ENCODE measurements at regions of chr15 and their contacts with region 1.

Region 1: DNA sequence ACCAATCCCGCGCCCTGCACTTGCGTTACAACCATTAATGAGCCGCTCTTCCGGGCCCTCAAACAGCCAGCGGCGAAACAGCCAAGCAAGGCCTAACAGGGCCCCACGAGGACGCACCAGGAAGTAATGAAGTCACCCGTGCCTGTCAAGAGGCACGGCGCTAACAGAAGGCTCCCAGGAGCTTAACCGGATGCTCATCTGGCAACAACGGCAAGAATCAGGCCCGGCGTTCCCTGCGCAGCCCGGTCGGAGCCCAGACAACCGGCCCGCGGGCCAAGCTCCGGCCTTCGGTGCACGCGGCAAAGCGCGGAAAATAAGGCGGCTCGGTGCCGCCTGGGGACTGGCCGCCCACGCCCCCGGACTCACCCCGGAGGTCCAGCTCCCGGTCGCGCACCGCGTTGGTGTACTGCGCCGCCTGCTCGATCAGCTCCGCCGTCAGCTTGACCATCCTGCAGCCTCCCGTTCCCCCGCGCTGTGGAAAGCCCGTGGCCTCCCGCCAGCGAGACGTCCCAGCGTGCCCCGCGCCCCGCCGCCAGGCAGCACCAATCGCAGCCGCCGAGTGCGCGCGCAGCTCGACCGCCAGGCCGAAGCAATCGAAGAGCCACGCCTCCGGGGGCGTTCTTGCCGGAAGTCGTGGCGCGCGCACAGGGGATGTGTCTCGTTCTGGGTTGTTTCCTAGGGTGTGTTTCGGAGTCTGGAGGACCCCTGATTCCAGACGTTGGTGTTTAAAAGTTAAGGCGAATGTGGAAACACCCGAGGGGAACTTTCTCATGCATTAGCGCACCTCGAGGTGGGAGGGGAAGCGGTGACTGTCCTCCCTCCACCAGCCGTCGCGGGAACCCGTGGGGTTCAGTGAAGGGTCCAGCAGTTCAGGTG is at the start of gene SNRPA1:
- DNase-seq: peak; percentile 99
- H3K4me3 Mint-ChIP-seq: peak within 1 kb of the TSS; percentile 90
- H3K27ac Mint-ChIP-seq: peak within 1 kb of the TSS; percentile 96
- H3K4me1 Mint-ChIP-seq: peaks cover 38% of the 10 kb centered on the region
- H3K27me3 Mint-ChIP-seq: no peaks in the 10 kb centered on the region
- total RNA-seq, gene SNRPA1: 195 and 210 TPM in 2 replicates

Region 2: GRCh38 chr15:100429116-100429728 is 865.7 kb before region 1 on chr15:
- intact Hi-C with region 1: no loop called
- DNase-seq: no peak
- H3K4me3 Mint-ChIP-seq: no peak overlapping the region
- H3K27ac Mint-ChIP-seq: no peak overlapping the region
- H3K4me1 Mint-ChIP-seq: no peaks in the 10 kb centered on the region
- H3K27me3 Mint-ChIP-seq: peaks cover 3% of the 10 kb centered on the region

Region 3: DNA sequence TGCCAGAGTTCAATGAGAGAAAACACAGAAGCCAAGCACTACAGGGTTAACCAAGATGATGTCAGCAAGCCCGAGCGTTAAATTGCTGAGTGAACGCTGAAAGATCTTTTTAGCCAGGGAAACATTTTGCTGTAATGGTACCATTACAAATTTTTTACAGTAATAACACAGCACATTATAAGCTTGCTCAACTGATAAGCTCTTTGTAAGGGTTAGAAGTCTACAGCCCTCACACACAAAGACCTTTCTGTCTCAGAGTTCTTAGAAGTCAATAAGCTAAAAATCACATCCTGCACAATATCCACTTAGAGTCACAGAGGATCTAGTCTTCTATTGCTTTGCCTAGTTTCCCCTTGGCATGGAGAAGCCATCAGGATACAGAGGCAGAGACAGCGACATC is 73.1 kb before region 1 on chr15:
- intact Hi-C with region 1: no loop called
- DNase-seq: no peak
- H3K4me3 Mint-ChIP-seq: no peak overlapping the region
- H3K27ac Mint-ChIP-seq: peak overlapping the region; percentile 60
- H3K4me1 Mint-ChIP-seq: peaks cover 50% of the 10 kb centered on the region
- H3K27me3 Mint-ChIP-seq: no peaks in the 10 kb centered on the region

Region 4: GRCh38 chr15:101277038-101277882 is 17.7 kb before region 1 on chr15 and contains the start of gene SELENOS:
- intact Hi-C with region 1: loop called (anchors 1 kb)
- DNase-seq: peak; percentile 98
- H3K4me3 Mint-ChIP-seq: peak within 1 kb of the TSS; percentile 92
- H3K27ac Mint-ChIP-seq: peak within 1 kb of the TSS; percentile 85
- H3K4me1 Mint-ChIP-seq: peaks cover 24% of the 10 kb centered on the region
- H3K27me3 Mint-ChIP-seq: no peaks in the 10 kb centered on the region
- total RNA-seq, gene SELENOS: 36.5 and 39.3 TPM in 2 replicates

Region 5: GRCh38 chr15:101333401-101333800 is 38.4 kb after region 1 on chr15:
- intact Hi-C with region 1: loop called (anchors 2 kb)
- DNase-seq: no peak
- H3K4me3 Mint-ChIP-seq: no peak overlapping the region
- H3K27ac Mint-ChIP-seq: no peak overlapping the region
- H3K4me1 Mint-ChIP-seq: peaks cover 9% of the 10 kb centered on the region
- H3K27me3 Mint-ChIP-seq: peaks cover 6% of the 10 kb centered on the region

Region 6: GRCh38 chr15:101641166-101641764 is 346.3 kb after region 1 on chr15:
- intact Hi-C with region 1: loop called (anchors 1 kb)
- DNase-seq: peak; percentile 93
- H3K4me3 Mint-ChIP-seq: peak overlapping the region; percentile 27
- H3K27ac Mint-ChIP-seq: peak overlapping the region; percentile 79
- H3K4me1 Mint-ChIP-seq: peaks cover 18% of the 10 kb centered on the region
- H3K27me3 Mint-ChIP-seq: no peaks in the 10 kb centered on the region

Region 7: DNA sequence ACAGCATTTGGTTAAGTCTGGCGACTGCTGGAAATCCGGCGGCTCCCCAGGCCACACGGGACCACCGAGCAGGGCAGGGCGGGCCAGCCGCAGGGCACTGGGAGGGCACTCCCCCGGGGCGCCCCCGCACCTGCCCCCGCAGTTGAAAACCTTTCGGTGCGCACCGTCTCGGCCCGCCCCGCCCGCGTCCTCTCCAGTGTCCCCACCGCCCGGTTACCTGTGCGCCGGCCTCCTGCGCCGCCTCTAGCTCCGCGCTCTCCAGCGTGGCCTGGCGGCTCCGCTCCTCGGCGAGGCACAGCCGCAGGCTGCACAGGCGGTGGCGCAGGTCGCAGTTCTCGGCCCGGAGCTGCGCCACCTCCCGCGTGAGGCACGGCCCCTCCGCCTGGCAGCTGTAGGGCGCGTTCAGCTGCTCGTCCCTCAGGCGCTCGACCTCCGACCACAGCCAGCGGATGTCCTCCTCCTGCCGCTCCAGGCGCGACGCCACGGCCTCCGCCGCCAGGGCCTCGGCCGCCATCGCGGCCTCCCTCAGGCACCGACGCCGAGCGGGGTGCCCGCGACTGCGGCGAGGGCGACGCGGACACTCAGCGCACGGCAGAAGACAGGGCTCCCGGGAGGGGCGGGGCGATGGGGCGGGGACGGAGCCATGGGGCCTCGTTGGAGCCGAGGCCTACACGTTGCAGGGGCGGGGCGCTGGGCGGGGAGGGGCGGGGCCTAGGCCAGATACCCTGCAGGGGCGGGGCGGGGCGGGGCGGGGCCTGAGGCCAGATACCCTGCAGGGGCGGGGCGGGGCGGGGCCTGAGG is 429.1 kb after region 1 on chr15 and contains the start of gene TARS3:
- intact Hi-C with region 1: loop called (anchors 1 kb)
- DNase-seq: peak; percentile 95
- H3K4me3 Mint-ChIP-seq: peak within 1 kb of the TSS; percentile 87
- H3K27ac Mint-ChIP-seq: peak within 1 kb of the TSS; percentile 95
- H3K4me1 Mint-ChIP-seq: peaks cover 14% of the 10 kb centered on the region
- H3K27me3 Mint-ChIP-seq: no peaks in the 10 kb centered on the region
- total RNA-seq, gene TARS3: 11.5 and 13.2 TPM in 2 replicates